Ascending aorta (tissue), 2 donors: ENCODE measurements at regions of chr22 and their contacts with region 1.

Region 1: GRCh38 chr22:39319270-39320022 is at the start of gene RPL3:
- DNase-seq: peak; percentile 86 to 97
- H3K4me3 ChIP-seq: peak within 1 kb of the TSS; percentile 83 to 92
- H3K27ac ChIP-seq: peak within 1 kb of the TSS; percentile 93 to 96
- H3K4me1 ChIP-seq: peaks cover 11 to 34% of the 10 kb centered on the region in 2 donors
- H3K27me3 ChIP-seq: no peaks in the 10 kb centered on the region
- CTCF ChIP-seq: peak; percentile 19 to 28 (median 23)
- total RNA-seq, gene RPL3: 1,479 TPM

Region 2: GRCh38 chr22:38788021-38788816 is 531.2 kb before region 1 on chr22:
- intact Hi-C with region 1: loop called (anchors 10 kb)
- DNase-seq: peak in 1 of 2 donors; percentile 73
- H3K4me3 ChIP-seq: no peak overlapping the region
- H3K27ac ChIP-seq: peak overlapping the region; percentile 76 to 83
- H3K4me1 ChIP-seq: peaks cover 3 to 42% of the 10 kb centered on the region in 2 donors
- H3K27me3 ChIP-seq: no peaks in the 10 kb centered on the region
- CTCF ChIP-seq: no peak

Region 3: GRCh38 chr22:38927033-38927781 is 392.2 kb before region 1 on chr22:
- intact Hi-C with region 1: loop called (anchors 10 kb)
- DNase-seq: peak in 1 of 2 donors; percentile 88
- H3K4me3 ChIP-seq: peak overlapping the region; percentile 56 to 61
- H3K27ac ChIP-seq: peak overlapping the region; percentile 76 to 80
- H3K4me1 ChIP-seq: peaks cover 4 to 18% of the 10 kb centered on the region in 2 donors
- H3K27me3 ChIP-seq: no peaks in the 10 kb centered on the region
- CTCF ChIP-seq: peak; percentile 33 to 83 (median 74)

Region 4: DNA sequence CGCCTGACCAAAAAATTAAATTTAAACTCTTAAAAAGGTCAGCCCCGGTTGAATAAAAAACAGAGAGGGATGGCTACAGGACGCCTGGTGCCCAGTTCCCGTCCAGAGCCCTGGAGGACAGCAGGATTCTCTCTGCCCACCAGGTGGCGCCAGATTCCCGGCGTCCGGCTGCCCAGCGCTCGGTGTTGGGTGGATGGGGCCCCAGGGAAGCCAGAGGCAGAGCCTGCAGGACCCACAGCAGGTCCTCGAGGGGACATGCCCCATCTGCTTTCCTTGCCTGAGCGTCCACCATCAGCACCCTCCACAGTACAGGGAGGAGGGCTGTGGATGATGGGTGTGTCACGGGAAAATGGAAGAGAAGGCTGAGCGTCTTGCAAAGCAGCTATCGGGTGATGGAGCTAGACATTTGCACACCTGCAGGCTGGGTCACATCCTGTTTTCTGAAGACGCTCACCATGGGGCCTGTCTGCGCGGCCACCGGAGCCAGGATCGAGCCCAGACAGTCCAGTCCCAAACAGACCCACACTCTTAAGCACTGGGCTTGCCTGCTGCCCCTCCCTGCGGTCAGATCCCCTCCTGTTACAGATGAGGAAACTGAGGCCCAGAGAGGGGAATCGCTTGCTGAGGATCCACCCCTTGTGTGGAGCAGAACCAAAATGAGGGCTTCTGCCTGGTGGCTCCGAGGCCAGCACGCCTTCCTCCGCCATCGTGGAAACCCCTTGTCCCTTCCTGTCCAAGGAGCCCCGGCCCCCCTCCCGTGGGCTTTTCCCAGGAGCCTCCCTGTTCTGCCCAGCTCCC is 148.4 kb before region 1 on chr22:
- intact Hi-C with region 1: loop called (anchors 1 kb)
- DNase-seq: peak in 1 of 2 donors; percentile 88
- H3K4me3 ChIP-seq: peak overlapping the region in 1 of 2 donors; percentile 31
- H3K27ac ChIP-seq: no peak overlapping the region
- H3K4me1 ChIP-seq: peaks cover 22 to 23% of the 10 kb centered on the region in 2 donors
- H3K27me3 ChIP-seq: no peaks in the 10 kb centered on the region
- CTCF ChIP-seq: peak; percentile 95 to 98 (median 96)

Region 5: GRCh38 chr22:39364714-39365491 is 45.5 kb after region 1 on chr22:
- intact Hi-C with region 1: no loop called
- DNase-seq: no peak
- H3K4me3 ChIP-seq: no peak overlapping the region
- H3K27ac ChIP-seq: no peak overlapping the region
- H3K4me1 ChIP-seq: no peaks in the 10 kb centered on the region
- H3K27me3 ChIP-seq: no peaks in the 10 kb centered on the region
- CTCF ChIP-seq: no peak

Region 6: GRCh38 chr22:39428578-39429071 is 109.2 kb after region 1 on chr22:
- intact Hi-C with region 1: no loop called
- DNase-seq: no peak
- H3K4me3 ChIP-seq: no peak overlapping the region
- H3K27ac ChIP-seq: peak overlapping the region in 1 of 2 donors; percentile 42
- H3K4me1 ChIP-seq: peaks cover 7 to 23% of the 10 kb centered on the region in 2 donors
- H3K27me3 ChIP-seq: no peaks in the 10 kb centered on the region
- CTCF ChIP-seq: no peak

Region 7: DNA sequence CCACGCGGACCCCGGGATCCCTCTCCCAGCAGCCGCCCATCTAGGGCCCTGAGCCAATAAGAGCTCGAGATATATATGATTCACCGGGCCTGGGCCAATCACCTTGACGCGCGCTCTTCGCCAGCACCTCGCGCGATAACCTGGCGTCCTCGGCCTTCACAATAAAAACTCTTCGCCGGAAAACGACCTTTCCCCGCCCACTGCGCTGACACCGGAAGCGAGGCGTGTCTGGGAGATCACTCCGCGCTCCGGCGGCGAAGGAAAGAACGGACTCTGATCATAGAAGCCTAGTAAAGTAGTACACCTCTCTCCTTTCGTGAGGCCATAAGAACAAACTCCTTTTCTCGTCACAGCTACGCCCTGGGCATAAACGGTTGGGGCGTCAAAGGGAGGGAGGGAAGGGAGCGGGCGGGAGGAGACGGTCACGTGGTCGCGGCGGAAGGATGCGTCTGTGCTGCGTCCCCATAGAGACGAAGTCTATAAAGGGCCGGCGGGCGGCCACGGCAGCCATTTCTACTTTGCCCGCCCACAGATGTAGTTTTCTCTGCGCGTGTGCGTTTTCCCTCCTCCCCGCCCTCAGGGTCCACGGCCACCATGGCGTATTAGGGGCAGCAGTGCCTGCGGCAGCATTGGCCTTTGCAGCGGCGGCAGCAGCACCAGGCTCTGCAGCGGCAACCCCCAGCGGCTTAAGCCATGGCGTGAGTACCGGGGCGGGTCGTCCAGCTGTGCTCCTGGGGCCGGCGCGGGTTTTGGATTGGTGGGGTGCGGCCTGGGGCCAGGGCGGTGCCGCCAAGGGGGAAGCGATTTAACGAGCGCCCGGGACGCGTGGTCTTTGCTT is 200.8 kb after region 1 on chr22 and contains the start of gene ATF4:
- intact Hi-C with region 1: loop called (anchors 5 kb)
- DNase-seq: peak; percentile 95 to 99
- H3K4me3 ChIP-seq: peak within 1 kb of the TSS; percentile 92 to 100
- H3K27ac ChIP-seq: peak within 1 kb of the TSS; percentile 100
- H3K4me1 ChIP-seq: peaks cover 27 to 36% of the 10 kb centered on the region in 2 donors
- H3K27me3 ChIP-seq: no peaks in the 10 kb centered on the region
- CTCF ChIP-seq: peak in 1 of 3 experiments; percentile 3
- total RNA-seq, gene ATF4: 173 TPM